Mammary epithelial cell (primary cell): ENCODE measurements at regions of chr19 and their contacts with region 1.

Region 1: GRCh38 chr19:46461537-46461936 is 9.8 kb downstream of the PNMA8A start:
- DNase-seq: peak; percentile 98
- H3K4me3 ChIP-seq: no peak overlapping the region
- H3K27ac ChIP-seq: peak overlapping the region; percentile 84
- H3K4me1 ChIP-seq: peaks cover 39% of the 10 kb centered on the region
- H3K27me3 ChIP-seq: no peaks in the 10 kb centered on the region
- CTCF ChIP-seq: no peak

Region 2: DNA sequence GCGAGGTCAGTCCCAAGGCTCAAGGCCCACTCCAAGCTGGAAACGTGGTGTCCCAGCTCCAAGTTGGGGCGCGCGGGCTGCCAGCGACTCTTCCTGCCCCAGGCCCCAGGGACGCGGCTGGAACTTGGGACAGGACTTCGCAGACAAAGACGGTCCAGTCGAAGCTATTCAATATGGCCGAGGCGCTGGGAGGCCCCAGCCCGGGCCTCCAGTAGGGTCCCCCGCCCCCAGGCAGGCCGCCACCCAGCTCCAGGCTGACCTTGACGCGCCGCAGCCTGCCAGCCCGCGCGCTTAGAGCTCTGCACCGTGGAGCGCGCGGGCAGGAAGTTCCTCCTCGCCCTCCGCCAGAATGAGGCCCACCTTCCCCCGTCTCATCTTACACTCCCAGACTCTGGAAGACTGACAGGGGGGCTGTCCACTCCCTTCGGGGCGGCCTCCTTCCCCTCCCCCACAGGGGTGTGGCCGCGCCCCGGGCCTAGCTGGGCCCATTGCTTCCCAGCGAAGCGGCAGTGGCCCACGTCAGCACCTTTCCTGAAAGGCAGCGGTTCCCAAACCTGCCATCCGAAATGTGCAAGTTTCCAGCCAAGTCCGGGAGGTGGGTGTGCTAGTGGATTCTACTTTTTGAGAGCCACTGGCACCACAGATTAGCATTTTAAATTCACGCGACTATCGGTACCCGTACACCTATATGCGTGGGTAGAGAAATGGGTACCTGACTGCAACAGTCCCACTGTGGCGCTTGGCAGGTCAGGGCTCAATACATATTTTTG is 48.1 kb before region 1 on chr19 and contains the start of gene CCDC8:
- CTCF ChIA-PET with region 1: no interaction called
- dilution Hi-C with region 1: no loop called
- in situ Hi-C with region 1: no loop called
- intact Hi-C with region 1: loop called (anchors 2 kb)
- DNase-seq: peak; percentile 97
- H3K4me3 ChIP-seq: peak within 1 kb of the TSS; percentile 79 to 94 (median 87)
- H3K27ac ChIP-seq: peak within 1 kb of the TSS; percentile 79
- H3K4me1 ChIP-seq: peaks cover 27% of the 10 kb centered on the region
- H3K27me3 ChIP-seq: no peaks in the 10 kb centered on the region
- CTCF ChIP-seq: no peak
- total RNA-seq, gene CCDC8: 94.6 to 110 TPM

Region 3: DNA sequence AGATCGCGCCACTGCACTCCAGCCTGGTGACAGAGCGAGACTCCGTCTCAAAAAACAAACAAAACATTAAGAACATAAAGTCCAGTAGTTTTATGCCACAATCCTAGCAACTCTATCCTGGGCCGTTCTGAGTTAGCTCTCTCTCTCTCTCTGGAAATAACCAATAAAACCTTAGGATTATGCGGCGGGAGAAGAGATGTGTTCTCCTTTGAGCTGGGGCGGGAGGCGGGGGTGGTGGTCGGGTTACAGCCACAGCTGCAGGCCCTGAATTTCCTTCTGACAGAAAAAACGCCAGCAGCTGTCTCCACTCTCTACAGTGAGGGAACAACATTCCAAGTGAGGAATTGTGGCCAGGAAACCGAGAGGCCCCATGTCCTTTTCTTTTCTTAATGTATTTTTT is 18.9 kb after region 1 on chr19:
- CTCF ChIA-PET with region 1: no interaction called
- dilution Hi-C with region 1: no loop called
- in situ Hi-C with region 1: no loop called
- intact Hi-C with region 1: loop called (anchors 2 kb)
- DNase-seq: no peak
- H3K4me3 ChIP-seq: no peak overlapping the region
- H3K27ac ChIP-seq: peak overlapping the region; percentile 63
- H3K4me1 ChIP-seq: peaks cover 33% of the 10 kb centered on the region
- H3K27me3 ChIP-seq: no peaks in the 10 kb centered on the region
- CTCF ChIP-seq: no peak

Region 4: DNA sequence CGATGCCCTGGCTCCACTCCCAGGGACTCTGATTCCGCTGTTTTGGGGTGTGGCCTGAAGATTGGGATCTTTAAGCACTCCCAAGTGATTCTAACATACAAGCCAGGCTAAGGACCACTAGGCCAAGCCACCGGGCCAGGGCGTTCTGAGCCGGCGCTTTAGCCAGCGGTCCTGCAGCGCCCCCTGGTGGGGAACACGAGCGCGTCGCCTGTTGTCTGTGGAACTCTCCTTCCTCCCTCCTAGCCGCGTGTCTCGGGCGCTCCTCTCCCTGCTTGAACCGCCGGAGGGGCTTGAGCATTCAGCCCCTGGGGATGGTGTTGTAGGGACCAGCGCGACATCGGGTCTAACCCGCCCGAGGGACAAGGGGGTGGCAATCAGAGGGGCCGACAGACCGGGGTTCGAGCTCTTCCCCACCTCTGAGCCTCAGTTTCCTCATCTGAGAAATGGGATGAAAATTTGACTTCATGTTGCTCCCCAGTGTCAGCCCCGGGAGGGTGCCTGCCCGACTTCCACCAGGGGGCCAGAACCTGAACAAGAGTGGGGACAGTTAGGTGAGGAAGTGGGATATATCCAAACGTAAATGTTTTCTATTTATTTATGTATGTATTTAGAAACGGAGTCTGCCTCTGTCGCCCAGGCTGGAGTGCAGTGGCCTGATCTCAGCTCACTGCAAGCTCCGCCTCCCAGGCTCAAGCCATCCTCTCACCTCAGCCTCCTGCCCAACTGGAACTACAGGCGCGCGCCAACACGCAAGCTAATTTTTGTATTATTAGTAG is 52.1 kb after region 1 on chr19:
- CTCF ChIA-PET with region 1: no interaction called
- dilution Hi-C with region 1: no loop called
- in situ Hi-C with region 1: no loop called
- intact Hi-C with region 1: no loop called
- DNase-seq: peak; percentile 57
- H3K4me3 ChIP-seq: no peak overlapping the region
- H3K27ac ChIP-seq: no peak overlapping the region
- H3K4me1 ChIP-seq: peaks cover 5% of the 10 kb centered on the region
- H3K27me3 ChIP-seq: no peaks in the 10 kb centered on the region
- CTCF ChIP-seq: peak; percentile 68 to 97